Esophagus muscularis mucosa (tissue), 4 donors: ENCODE measurements at regions of chr17 and their contacts with region 1.

Region 1: GRCh38 chr17:76523084-76524037 is 14.1 kb downstream of the CYGB start:
- DNase-seq: no peak
- H3K4me3 ChIP-seq: no peak overlapping the region
- H3K27ac ChIP-seq: no peak overlapping the region
- H3K4me1 ChIP-seq: peaks cover 34 to 38% (median 37%) of the 10 kb centered on the region in 4 donors
- H3K27me3 ChIP-seq: peaks cover 0 to 46% (median 0%) of the 10 kb centered on the region in 4 donors
- CTCF ChIP-seq: peak in 2 of 3 experiments; percentile 99 to 100
- EP300 ChIP-seq: no peak
- POLR2A ChIP-seq: no peak

Region 2: GRCh38 chr17:76370261-76370993 is 152.9 kb before region 1 on chr17:
- intact Hi-C with region 1: no loop called
- DNase-seq: no peak
- H3K4me3 ChIP-seq: no peak overlapping the region
- H3K27ac ChIP-seq: peak overlapping the region; percentile 27 to 67 (median 54)
- H3K4me1 ChIP-seq: peaks cover 12 to 24% (median 20%) of the 10 kb centered on the region in 4 donors
- H3K27me3 ChIP-seq: peaks cover 0 to 7% (median 0%) of the 10 kb centered on the region in 4 donors
- CTCF ChIP-seq: peak in 2 of 3 experiments; percentile 29 to 53
- EP300 ChIP-seq: no peak
- POLR2A ChIP-seq: no peak

Region 3: GRCh38 chr17:76557368-76558197 is 34.2 kb after region 1 on chr17:
- intact Hi-C with region 1: loop called (anchors 5 kb)
- DNase-seq: peak; percentile 98
- H3K4me3 ChIP-seq: peak overlapping the region; percentile 64 to 75 (median 71)
- H3K27ac ChIP-seq: peak overlapping the region; percentile 83 to 93 (median 86)
- H3K4me1 ChIP-seq: peaks cover 53 to 61% (median 56%) of the 10 kb centered on the region in 4 donors
- H3K27me3 ChIP-seq: no peaks in the 10 kb centered on the region
- CTCF ChIP-seq: peak; percentile 37 to 66 (median 64)
- EP300 ChIP-seq: no peak
- POLR2A ChIP-seq: peak; percentile 68

Region 4: DNA sequence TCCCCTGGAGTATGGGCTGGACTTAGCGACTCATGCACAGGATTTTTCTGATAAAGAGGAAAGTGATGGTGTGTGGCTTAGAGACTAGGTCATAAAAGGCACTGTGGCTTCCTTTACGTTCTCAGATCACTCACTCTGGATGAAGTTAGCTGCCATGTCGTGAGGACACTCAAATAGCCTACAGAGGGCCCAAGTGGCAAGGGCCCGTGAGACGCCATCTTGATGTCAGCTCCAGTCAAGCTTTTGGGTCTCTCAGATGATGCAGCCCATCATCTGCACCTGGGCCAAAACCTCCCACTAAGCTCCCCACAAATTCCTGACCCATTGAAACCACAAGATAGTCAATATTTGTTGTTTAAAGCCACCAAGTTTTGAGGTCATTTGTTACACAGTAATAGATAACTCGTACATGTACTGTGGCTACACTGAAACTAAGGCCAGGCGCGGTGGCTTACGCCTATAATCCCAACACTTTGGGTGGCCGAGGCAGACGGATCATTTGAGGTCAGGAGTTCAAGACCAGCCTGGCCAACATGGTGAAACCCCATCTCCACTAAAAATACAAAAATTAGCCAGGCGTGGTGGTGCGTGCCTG is 47.6 kb after region 1 on chr17:
- intact Hi-C with region 1: no loop called
- DNase-seq: no peak
- H3K4me3 ChIP-seq: no peak overlapping the region
- H3K27ac ChIP-seq: no peak overlapping the region
- H3K4me1 ChIP-seq: peaks cover 13 to 17% (median 16%) of the 10 kb centered on the region in 4 donors
- H3K27me3 ChIP-seq: peaks cover 0 to 15% (median 0%) of the 10 kb centered on the region in 4 donors
- CTCF ChIP-seq: no peak
- EP300 ChIP-seq: no peak
- POLR2A ChIP-seq: no peak

Region 5: GRCh38 chr17:76585818-76586593 is 62.6 kb after region 1 on chr17 and contains the start of gene ST6GALNAC2:
- intact Hi-C with region 1: loop called (anchors 2 kb)
- DNase-seq: no peak
- H3K4me3 ChIP-seq: peak within 1 kb of the TSS; percentile 61 to 69 (median 64)
- H3K27ac ChIP-seq: peak within 1 kb of the TSS; percentile 59 to 72 (median 67)
- H3K4me1 ChIP-seq: peaks cover 15 to 30% (median 27%) of the 10 kb centered on the region in 4 donors
- H3K27me3 ChIP-seq: peaks cover 0 to 56% (median 25%) of the 10 kb centered on the region in 4 donors
- CTCF ChIP-seq: peak; percentile 41 to 55 (median 52)
- EP300 ChIP-seq: no peak
- POLR2A ChIP-seq: no peak
- total RNA-seq, gene ST6GALNAC2: 8.7 to 17.8 (median 13.3) TPM

Region 6: GRCh38 chr17:76597728-76598474 is 74.5 kb after region 1 on chr17:
- intact Hi-C with region 1: no loop called
- DNase-seq: no peak
- H3K4me3 ChIP-seq: no peak overlapping the region
- H3K27ac ChIP-seq: no peak overlapping the region
- H3K4me1 ChIP-seq: peaks cover 0 to 15% (median 6%) of the 10 kb centered on the region in 4 donors
- H3K27me3 ChIP-seq: peaks cover 0 to 21% (median 0%) of the 10 kb centered on the region in 4 donors
- CTCF ChIP-seq: no peak
- EP300 ChIP-seq: no peak
- POLR2A ChIP-seq: no peak

Region 7: GRCh38 chr17:76623271-76624146 is 100.1 kb after region 1 on chr17:
- intact Hi-C with region 1: loop called (anchors 1 kb)
- DNase-seq: no peak
- H3K4me3 ChIP-seq: no peak overlapping the region
- H3K27ac ChIP-seq: no peak overlapping the region
- H3K4me1 ChIP-seq: peaks cover 0 to 9% (median 5%) of the 10 kb centered on the region in 4 donors
- H3K27me3 ChIP-seq: no peaks in the 10 kb centered on the region
- CTCF ChIP-seq: peak in 2 of 3 experiments; percentile 94
- EP300 ChIP-seq: no peak
- POLR2A ChIP-seq: no peak

Region 8: GRCh38 chr17:77160091-77160874 is 636.9 kb after region 1 on chr17:
- intact Hi-C with region 1: no loop called
- DNase-seq: no peak
- H3K4me3 ChIP-seq: no peak overlapping the region
- H3K27ac ChIP-seq: peak overlapping the region in 1 of 4 donors; percentile 0
- H3K4me1 ChIP-seq: peaks cover 61 to 75% (median 68%) of the 10 kb centered on the region in 4 donors
- H3K27me3 ChIP-seq: no peaks in the 10 kb centered on the region
- CTCF ChIP-seq: no peak
- EP300 ChIP-seq: no peak
- POLR2A ChIP-seq: no peak